T-cell (primary cell): ENCODE measurements at regions of chr16 and their contacts with region 1.

Region 1: GRCh38 chr16:50806099-50807062 is 64.5 kb downstream of the CYLD start:
- DNase-seq: peak; percentile 61 to 94 (median 80)
- ATAC-seq: peak; percentile 91 to 93 (median 92)
- H3K4me3 ChIP-seq: peak overlapping the region in 1 of 2 donors; percentile 22
- H3K4me3 Mint-ChIP-seq: peak overlapping the region; percentile 63 to 78 (median 65)
- H3K27ac ChIP-seq: peak overlapping the region; percentile 5
- H3K27ac Mint-ChIP-seq: peak overlapping the region; percentile 72 to 78
- H3K4me1 ChIP-seq: peaks cover 0 to 15% of the 10 kb centered on the region in 2 experiments
- H3K4me1 Mint-ChIP-seq: peaks cover 13 to 21% (median 16%) of the 10 kb centered on the region in 3 donors
- H3K27me3 ChIP-seq: no peaks in the 10 kb centered on the region
- H3K27me3 Mint-ChIP-seq: no peaks in the 10 kb centered on the region

Region 2: DNA sequence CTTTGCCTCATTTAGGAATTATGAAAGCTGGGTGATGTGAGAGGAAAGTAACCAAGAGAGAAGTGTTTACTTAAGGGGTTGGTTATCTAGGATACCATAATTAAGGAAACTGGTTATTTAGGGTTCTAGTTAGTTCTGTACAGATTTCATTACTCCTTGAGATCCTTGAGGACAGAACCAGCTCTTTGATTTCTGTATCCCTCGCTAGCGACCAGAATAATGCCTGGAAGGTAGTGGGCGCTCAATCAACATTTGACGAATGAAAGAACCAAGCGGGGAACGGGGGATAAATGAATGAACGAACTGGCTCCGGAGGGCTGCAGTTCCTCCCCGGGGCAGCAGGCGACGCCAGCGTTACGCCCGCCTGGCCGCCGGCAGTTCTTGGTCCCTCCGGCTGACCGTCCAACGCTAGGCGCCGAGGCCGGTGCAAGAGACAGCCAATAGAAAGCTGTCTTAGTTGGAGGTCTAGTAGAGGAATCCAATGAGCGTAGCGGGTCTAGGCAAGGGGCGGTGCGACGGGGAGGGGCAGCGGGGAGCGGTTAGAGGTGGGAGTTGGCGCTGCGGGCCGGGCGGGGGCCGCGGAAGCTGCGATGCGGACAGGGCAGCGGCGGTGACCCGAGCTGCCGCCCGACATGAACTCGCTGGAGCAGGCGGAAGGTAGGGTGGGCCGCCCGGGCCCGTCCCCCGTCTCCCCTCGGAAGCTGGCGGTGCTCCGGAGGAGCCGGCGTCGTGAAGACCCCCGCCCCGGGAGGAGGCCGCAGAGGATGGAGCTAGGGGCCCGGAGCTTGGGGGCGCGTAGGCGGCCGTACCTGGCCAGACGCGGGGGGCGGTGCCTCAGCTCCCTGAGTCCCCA is 781.5 kb before region 1 on chr16 and contains the start of gene CNEP1R1:
- CTCF ChIA-PET with region 1: interaction called in 1 of 2 experiments, 52 read pairs
- POLR2A ChIA-PET with region 1: no interaction called
- DNase-seq: peak; percentile 76 to 96 (median 87)
- ATAC-seq: peak; percentile 94 to 97 (median 96)
- H3K4me3 ChIP-seq: peak within 1 kb of the TSS; percentile 75 to 80
- H3K4me3 Mint-ChIP-seq: peak within 1 kb of the TSS; percentile 92 to 94 (median 93)
- H3K27ac ChIP-seq: peak within 1 kb of the TSS; percentile 56
- H3K27ac Mint-ChIP-seq: peak within 1 kb of the TSS; percentile 87 to 90
- H3K4me1 ChIP-seq: peaks cover 8 to 18% of the 10 kb centered on the region in 2 experiments
- H3K4me1 Mint-ChIP-seq: peaks cover 26 to 35% (median 34%) of the 10 kb centered on the region in 3 donors
- H3K27me3 ChIP-seq: peaks cover 0 to under 1% of the 10 kb centered on the region in 2 experiments
- H3K27me3 Mint-ChIP-seq: no peaks in the 10 kb centered on the region
- total RNA-seq, gene CNEP1R1: 26.7 to 32.9 (median 27.5) TPM

Region 3: GRCh38 chr16:50326949-50327402 is 479.4 kb before region 1 on chr16:
- CTCF ChIA-PET with region 1: interaction called, 6 to 27 read pairs
- POLR2A ChIA-PET with region 1: no interaction called
- DNase-seq: peak; percentile 36 to 87 (median 70)
- ATAC-seq: peak; percentile 82 to 94 (median 87)
- H3K4me3 ChIP-seq: no peak overlapping the region
- H3K4me3 Mint-ChIP-seq: no peak overlapping the region
- H3K27ac ChIP-seq: peak overlapping the region; percentile 75
- H3K27ac Mint-ChIP-seq: peak overlapping the region; percentile 85 to 88
- H3K4me1 ChIP-seq: peaks cover 5 to 18% of the 10 kb centered on the region in 2 experiments
- H3K4me1 Mint-ChIP-seq: peaks cover 43 to 63% (median 62%) of the 10 kb centered on the region in 3 donors
- H3K27me3 ChIP-seq: no peaks in the 10 kb centered on the region
- H3K27me3 Mint-ChIP-seq: no peaks in the 10 kb centered on the region

Region 4: DNA sequence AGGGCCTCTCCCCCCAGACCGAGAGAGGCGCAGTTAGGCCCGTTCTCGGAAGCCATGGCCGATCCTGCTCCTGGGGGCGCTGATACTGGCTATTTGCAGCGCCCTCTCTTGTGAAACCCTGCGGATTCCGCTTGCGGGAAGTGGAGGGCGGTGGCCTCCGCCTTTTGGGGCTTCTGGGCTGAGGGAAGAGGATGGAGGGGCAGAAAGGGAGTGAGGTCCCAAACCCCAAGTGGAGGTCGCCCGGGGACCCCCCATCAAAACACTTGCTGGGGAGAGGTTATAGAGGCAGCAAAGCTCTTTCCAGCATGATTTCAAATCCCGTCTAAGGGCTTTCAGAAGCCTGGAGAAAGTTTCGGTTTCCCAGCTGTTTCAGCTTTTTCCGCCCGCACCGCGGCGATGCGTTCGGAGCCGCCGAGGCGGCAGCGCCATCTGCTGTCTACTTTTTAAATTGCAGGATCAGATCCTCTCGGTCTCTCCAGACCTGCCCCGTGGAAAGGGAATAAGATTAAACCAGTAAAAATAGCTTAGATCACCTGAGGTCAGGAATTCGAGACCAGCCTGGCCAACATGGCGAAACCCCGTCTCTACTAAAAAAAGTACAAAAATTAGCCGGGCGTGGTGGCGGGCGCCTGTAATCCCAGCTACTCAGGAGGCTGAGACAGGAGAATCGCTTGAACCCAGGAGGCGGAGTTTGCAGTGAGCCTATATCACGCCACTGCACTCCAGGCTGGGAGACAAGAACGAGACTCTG is 141.1 kb before region 1 on chr16:
- CTCF ChIA-PET with region 1: interaction called, 5 to 62 read pairs
- POLR2A ChIA-PET with region 1: no interaction called
- DNase-seq: peak; percentile 39 to 89 (median 76)
- ATAC-seq: peak; percentile 53 to 73 (median 60)
- H3K4me3 ChIP-seq: peak overlapping the region; percentile 51 to 59
- H3K4me3 Mint-ChIP-seq: peak overlapping the region; percentile 72 to 75 (median 73)
- H3K27ac ChIP-seq: no peak overlapping the region
- H3K27ac Mint-ChIP-seq: peak overlapping the region; percentile 81 to 85
- H3K4me1 ChIP-seq: peaks cover 6 to 38% of the 10 kb centered on the region in 2 experiments
- H3K4me1 Mint-ChIP-seq: peaks cover 37 to 44% (median 41%) of the 10 kb centered on the region in 3 donors
- H3K27me3 ChIP-seq: no peaks in the 10 kb centered on the region
- H3K27me3 Mint-ChIP-seq: no peaks in the 10 kb centered on the region

Region 5: GRCh38 chr16:50747207-50747956 is 59.0 kb before region 1 on chr16:
- CTCF ChIA-PET with region 1: interaction called in 1 of 2 experiments, 52 read pairs
- POLR2A ChIA-PET with region 1: no interaction called
- DNase-seq: peak in 13 of 35 experiments; percentile 7 to 77 (median 30)
- ATAC-seq: peak; percentile 74 to 79 (median 77)
- H3K4me3 ChIP-seq: peak overlapping the region; percentile 15 to 37
- H3K4me3 Mint-ChIP-seq: peak overlapping the region; percentile 72 to 98 (median 81)
- H3K27ac ChIP-seq: peak overlapping the region; percentile 100
- H3K27ac Mint-ChIP-seq: peak overlapping the region; percentile 95 to 97
- H3K4me1 ChIP-seq: peaks cover 16 to 62% of the 10 kb centered on the region in 2 experiments
- H3K4me1 Mint-ChIP-seq: peaks cover 71 to 77% (median 76%) of the 10 kb centered on the region in 3 donors
- H3K27me3 ChIP-seq: no peaks in the 10 kb centered on the region
- H3K27me3 Mint-ChIP-seq: no peaks in the 10 kb centered on the region

Region 6: DNA sequence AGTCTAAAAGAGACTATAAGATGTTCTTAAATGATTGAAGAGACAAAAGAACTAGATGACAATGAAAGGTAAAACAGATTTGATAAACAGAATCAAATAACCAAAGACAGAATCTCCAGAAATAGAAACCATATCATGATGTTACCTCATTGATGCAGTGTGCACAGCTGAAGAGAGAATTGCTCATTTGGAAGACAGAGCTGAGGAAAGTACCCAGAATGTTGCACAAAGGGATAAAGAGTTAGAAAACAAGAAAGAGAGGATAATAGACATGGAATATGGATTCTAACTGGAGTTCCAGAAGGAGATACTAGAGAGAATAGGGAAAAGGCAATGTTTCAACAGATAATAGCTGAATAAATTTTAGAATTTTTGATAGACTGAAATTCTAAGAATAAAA is 16.6 kb before region 1 on chr16:
- CTCF ChIA-PET with region 1: interaction called, 5 to 25 read pairs
- POLR2A ChIA-PET with region 1: no interaction called
- DNase-seq: no peak
- ATAC-seq: no peak
- H3K4me3 ChIP-seq: no peak overlapping the region
- H3K4me3 Mint-ChIP-seq: no peak overlapping the region
- H3K27ac ChIP-seq: peak overlapping the region; percentile 12
- H3K27ac Mint-ChIP-seq: peak overlapping the region; percentile 34 to 85
- H3K4me1 ChIP-seq: no peaks in the 10 kb centered on the region
- H3K4me1 Mint-ChIP-seq: peaks cover 11 to 26% (median 19%) of the 10 kb centered on the region in 3 donors
- H3K27me3 ChIP-seq: no peaks in the 10 kb centered on the region
- H3K27me3 Mint-ChIP-seq: no peaks in the 10 kb centered on the region

Region 7: GRCh38 chr16:50925758-50926357 is 119.5 kb after region 1 on chr16:
- CTCF ChIA-PET with region 1: no interaction called
- POLR2A ChIA-PET with region 1: no interaction called
- DNase-seq: no peak
- ATAC-seq: no peak
- H3K4me3 ChIP-seq: no peak overlapping the region
- H3K4me3 Mint-ChIP-seq: no peak overlapping the region
- H3K27ac ChIP-seq: no peak overlapping the region
- H3K27ac Mint-ChIP-seq: no peak overlapping the region
- H3K4me1 ChIP-seq: no peaks in the 10 kb centered on the region
- H3K4me1 Mint-ChIP-seq: no peaks in the 10 kb centered on the region
- H3K27me3 ChIP-seq: peaks cover 0 to 21% of the 10 kb centered on the region in 2 experiments
- H3K27me3 Mint-ChIP-seq: peaks cover 5 to 18% of the 10 kb centered on the region in 2 donors